Activated T-helper 1 cell treated with anti-CD3 and anti-CD28 coated beads, Interleukin-12 subunit alpha, Interleukin-12 subunit beta, Interleukin-2, Interleukin-4 antibody, amounts not matched to agents 30 ng/mL and 10 ng/mL and 1 ng/mL, durations not matched to agents 14 hours and 24 hours and 36 hours (primary cell): ENCODE measurements at regions of chr18 and their contacts with region 1.

Region 1: DNA sequence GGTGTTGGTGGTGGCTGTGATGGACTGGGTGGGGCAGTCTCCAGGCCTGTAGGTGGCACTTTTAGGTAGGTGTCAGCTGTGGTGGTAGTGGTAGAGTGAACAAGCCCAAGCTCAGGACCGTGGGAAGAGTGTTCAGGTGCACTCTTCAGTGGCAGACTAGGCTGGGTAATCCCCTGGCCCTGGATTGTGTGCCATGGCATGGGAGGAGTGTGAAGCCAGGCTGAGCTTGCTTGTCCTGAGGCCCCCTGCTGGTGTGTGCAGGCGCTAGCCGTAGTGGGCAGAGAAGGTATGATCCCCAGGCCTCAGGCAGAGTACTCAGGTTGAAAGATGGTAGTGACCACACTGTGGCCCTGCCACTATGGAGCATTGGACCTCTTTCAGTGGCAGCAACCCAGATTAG is 850.3 kb downstream of the DSC3 start:
- DNase-seq: no peak
- H3K4me3 Mint-ChIP-seq: no peak overlapping the region
- H3K27ac Mint-ChIP-seq: no peak overlapping the region
- H3K4me1 Mint-ChIP-seq: no peaks in the 10 kb centered on the region
- H3K27me3 Mint-ChIP-seq: no peaks in the 10 kb centered on the region

Region 2: DNA sequence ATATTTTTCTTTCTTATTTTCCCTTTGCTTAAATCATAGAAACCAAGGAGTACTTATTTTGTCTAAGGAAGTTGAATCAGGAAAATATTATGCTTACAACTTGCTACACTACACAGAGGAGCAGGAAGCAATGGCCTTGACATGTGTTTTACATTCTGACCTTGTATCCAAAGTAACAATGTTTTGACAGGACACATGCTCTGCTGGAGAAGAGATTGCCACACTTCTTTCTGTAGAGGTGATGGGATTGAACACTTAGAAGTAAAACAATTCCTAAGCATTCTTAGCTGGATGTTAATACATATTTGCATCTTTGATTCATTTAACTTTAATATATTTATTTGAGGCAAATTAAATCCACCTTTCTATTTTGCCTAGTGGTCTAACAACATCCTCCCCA is 78.8 kb before region 1 on chr18:
- intact Hi-C with region 1: loop called (anchors 10 kb)
- DNase-seq: no peak
- H3K4me3 Mint-ChIP-seq: no peak overlapping the region
- H3K27ac Mint-ChIP-seq: no peak overlapping the region
- H3K4me1 Mint-ChIP-seq: no peaks in the 10 kb centered on the region
- H3K27me3 Mint-ChIP-seq: no peaks in the 10 kb centered on the region

Region 3: GRCh38 chr18:30163573-30163972 is 28.6 kb before region 1 on chr18:
- intact Hi-C with region 1: no loop called
- DNase-seq: no peak
- H3K4me3 Mint-ChIP-seq: no peak overlapping the region
- H3K27ac Mint-ChIP-seq: no peak overlapping the region
- H3K4me1 Mint-ChIP-seq: no peaks in the 10 kb centered on the region
- H3K27me3 Mint-ChIP-seq: no peaks in the 10 kb centered on the region

Region 4: GRCh38 chr18:30177056-30177455 is 15.2 kb before region 1 on chr18:
- intact Hi-C with region 1: no loop called
- DNase-seq: no peak
- H3K4me3 Mint-ChIP-seq: no peak overlapping the region
- H3K27ac Mint-ChIP-seq: no peak overlapping the region
- H3K4me1 Mint-ChIP-seq: no peaks in the 10 kb centered on the region
- H3K27me3 Mint-ChIP-seq: no peaks in the 10 kb centered on the region

Region 5: DNA sequence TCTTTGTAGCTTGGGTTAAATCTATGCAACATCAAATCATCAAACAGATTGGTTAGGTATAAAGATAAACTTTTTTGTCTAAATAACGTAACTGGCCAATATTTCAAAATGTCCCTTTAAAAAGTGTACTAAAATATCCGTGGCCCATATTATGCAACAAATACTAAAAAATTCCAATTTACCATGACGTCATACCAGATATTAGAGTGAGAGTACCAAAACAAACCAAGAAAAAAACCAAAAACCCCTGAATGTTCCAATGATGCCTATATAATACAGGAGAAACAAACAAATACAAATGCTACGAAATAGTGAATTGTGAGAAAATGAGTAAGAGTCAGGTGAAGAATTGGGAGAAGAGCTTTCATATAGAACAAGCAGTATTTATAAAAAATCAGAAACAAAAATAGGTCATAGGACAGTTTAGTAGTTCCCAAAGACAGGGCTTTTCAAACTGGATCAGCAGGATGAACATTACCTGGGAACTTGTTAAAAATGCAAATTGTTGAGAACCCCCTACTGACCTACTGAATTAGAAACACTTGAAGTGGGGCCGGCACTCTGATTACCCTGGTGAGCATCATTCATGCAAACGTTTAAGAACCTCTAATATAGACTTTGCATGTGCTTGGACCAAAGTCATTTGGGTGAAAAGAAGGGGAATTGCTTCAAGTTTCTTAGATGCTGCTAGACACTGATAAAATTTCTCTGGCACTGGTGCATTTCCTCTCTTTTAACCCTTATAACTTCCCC is 96.6 kb after region 1 on chr18:
- intact Hi-C with region 1: no loop called
- DNase-seq: no peak
- H3K4me3 Mint-ChIP-seq: no peak overlapping the region
- H3K27ac Mint-ChIP-seq: no peak overlapping the region
- H3K4me1 Mint-ChIP-seq: no peaks in the 10 kb centered on the region
- H3K27me3 Mint-ChIP-seq: no peaks in the 10 kb centered on the region

Region 6: GRCh38 chr18:31321719-31322118 is 1129.5 kb after region 1 on chr18:
- intact Hi-C with region 1: no loop called
- DNase-seq: no peak
- H3K4me3 Mint-ChIP-seq: no peak overlapping the region
- H3K27ac Mint-ChIP-seq: no peak overlapping the region
- H3K4me1 Mint-ChIP-seq: no peaks in the 10 kb centered on the region
- H3K27me3 Mint-ChIP-seq: no peaks in the 10 kb centered on the region